Ascending aorta (tissue), 2 donors: ENCODE measurements at regions of chr17 and their contacts with region 1.

Region 1: DNA sequence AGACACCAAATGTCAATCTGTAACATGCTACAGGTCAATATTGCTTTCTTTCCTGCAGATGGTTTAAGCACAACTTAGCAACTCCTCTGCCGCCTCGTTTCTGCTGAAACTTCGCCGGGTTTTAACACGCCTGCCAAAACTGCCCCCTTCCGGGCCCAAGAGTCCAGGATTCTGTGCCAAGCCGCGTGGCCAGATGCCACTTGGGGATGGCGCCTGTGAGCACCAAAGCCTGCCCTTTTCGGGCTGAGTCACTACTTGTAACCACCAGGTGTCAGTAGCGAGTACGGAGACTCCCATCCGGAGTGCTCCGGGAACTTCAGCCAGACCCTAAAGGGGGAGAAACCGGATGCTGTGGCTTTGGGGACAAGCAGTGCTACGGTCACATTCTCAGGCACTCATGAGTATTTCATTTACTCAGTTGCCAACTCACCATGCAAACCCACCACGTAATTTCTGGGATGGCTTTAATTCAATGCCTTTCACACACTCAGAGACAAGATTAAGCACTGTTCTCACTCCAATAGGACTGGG is 7.8 kb downstream of the PMP22 start:
- DNase-seq: peak; percentile 39 to 94
- H3K4me3 ChIP-seq: peak overlapping the region; percentile 27 to 49
- H3K27ac ChIP-seq: peak overlapping the region; percentile 67 to 77
- H3K4me1 ChIP-seq: peaks cover 20 to 46% of the 10 kb centered on the region in 2 donors
- H3K27me3 ChIP-seq: no peaks in the 10 kb centered on the region
- CTCF ChIP-seq: peak; percentile 79 to 93 (median 86)

Region 2: GRCh38 chr17:15456972-15457722 is 199.8 kb after region 1 on chr17:
- intact Hi-C with region 1: loop called (anchors 2 kb)
- DNase-seq: peak in 1 of 2 donors; percentile 79
- H3K4me3 ChIP-seq: peak overlapping the region in 1 of 2 donors; percentile 46
- H3K27ac ChIP-seq: peak overlapping the region; percentile 76 to 82
- H3K4me1 ChIP-seq: peaks cover 8 to 19% of the 10 kb centered on the region in 2 donors
- H3K27me3 ChIP-seq: no peaks in the 10 kb centered on the region
- CTCF ChIP-seq: peak in 2 of 3 experiments; percentile 19 to 39

Region 3: DNA sequence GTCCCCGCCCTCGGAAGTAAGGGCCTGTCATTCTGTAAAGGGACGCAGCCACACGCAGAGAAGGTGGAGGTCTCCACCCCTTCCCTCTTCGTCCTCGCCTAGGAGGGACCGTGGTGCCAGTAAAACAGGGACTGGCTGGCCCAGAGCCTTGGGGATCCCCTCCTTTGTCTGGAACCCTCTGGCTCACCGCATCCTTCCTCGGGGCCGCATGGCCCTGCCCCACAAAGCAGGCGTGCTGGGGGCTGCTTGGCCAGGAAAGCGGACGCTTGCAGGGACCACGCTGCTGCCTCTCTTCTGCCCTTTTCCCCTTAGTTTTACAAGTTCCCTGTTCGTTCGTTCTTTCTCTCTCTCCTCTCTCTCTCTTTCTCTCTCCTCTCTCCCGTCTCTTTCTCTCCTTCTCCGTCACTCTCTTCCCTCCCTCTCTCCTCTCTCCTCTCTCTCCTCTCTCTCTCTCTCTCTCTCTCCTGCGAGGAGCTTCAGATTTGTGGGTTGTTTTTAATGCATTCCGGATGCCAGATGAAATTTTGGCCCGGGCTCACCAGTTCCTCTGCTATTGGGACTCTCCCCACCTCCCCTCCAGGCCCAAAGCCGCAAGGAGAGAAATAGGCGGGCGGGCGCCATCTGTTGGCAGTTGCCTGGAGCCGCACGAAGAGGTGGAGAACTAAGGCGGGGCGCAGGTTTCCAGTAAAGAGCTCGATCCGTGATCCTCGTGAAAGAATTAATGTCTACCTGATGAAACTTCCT is 245.2 kb after region 1 on chr17:
- intact Hi-C with region 1: loop called (anchors 1 kb)
- DNase-seq: peak in 1 of 2 donors; percentile 95
- H3K4me3 ChIP-seq: peak overlapping the region; percentile 29 to 57
- H3K27ac ChIP-seq: peak overlapping the region; percentile 53 to 62
- H3K4me1 ChIP-seq: peaks cover 3 to 11% of the 10 kb centered on the region in 2 donors
- H3K27me3 ChIP-seq: no peaks in the 10 kb centered on the region
- CTCF ChIP-seq: peak; percentile 85 to 92 (median 89)

Region 4: GRCh38 chr17:15999439-16000350 is 742.4 kb after region 1 on chr17 and contains the starts of genes TTC19 and ZSWIM7:
- intact Hi-C with region 1: loop called (anchors 2 kb)
- DNase-seq: peak; percentile 82 to 97
- H3K4me3 ChIP-seq: peak within 1 kb of the TSS; percentile 75 to 82
- H3K27ac ChIP-seq: peak within 1 kb of the TSS; percentile 93 to 96
- H3K4me1 ChIP-seq: peaks cover 9 to 12% of the 10 kb centered on the region in 2 donors
- H3K27me3 ChIP-seq: no peaks in the 10 kb centered on the region
- CTCF ChIP-seq: no peak
- total RNA-seq, gene TTC19: 158 TPM
- total RNA-seq, gene ZSWIM7: 0.75 TPM